CD8-positive, alpha-beta T cell (primary cell): ENCODE measurements at regions of chr13 and their contacts with region 1.

Region 1: GRCh38 chr13:42333613-42334328 is 61.8 kb downstream of the AKAP11 start:
- DNase-seq: peak in 2 of 9 experiments; percentile 30 to 41
- ATAC-seq: no peak
- H3K4me3 ChIP-seq: no peak overlapping the region
- H3K4me3 Mint-ChIP-seq: no peak overlapping the region
- H3K27ac ChIP-seq: no peak overlapping the region
- H3K27ac Mint-ChIP-seq: peak overlapping the region; percentile 30
- H3K4me1 ChIP-seq: peaks cover 8% of the 10 kb centered on the region
- H3K4me1 Mint-ChIP-seq: peaks cover 29% of the 10 kb centered on the region
- H3K27me3 ChIP-seq: no peaks in the 10 kb centered on the region
- H3K27me3 Mint-ChIP-seq: no peaks in the 10 kb centered on the region
- CTCF ChIP-seq: peak; percentile 32

Region 2: DNA sequence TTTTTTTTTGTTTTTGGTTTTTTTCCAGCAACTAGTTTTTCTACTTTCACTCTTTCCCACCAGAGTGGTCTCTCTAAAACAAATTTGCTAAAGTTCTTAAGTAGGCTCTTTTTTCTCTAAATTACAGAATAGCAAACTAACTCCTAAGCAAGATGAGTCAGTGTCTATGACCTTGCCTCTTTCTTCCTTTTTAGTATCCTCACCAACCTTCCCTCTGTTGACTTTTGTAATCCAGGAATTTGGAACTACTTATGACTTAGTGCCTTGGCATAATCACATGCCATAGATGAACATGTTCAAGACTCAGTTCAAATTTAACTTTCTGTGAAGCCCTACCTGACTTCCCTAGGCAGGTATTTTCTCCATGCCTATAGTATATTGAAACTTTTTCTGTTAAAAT is 94.1 kb before region 1 on chr13:
- CTCF ChIA-PET with region 1: no interaction called
- POLR2A ChIA-PET with region 1: no interaction called
- intact Hi-C with region 1: no loop called
- DNase-seq: no peak
- ATAC-seq: no peak
- H3K4me3 ChIP-seq: no peak overlapping the region
- H3K4me3 Mint-ChIP-seq: no peak overlapping the region
- H3K27ac ChIP-seq: no peak overlapping the region
- H3K27ac Mint-ChIP-seq: no peak overlapping the region
- H3K4me1 ChIP-seq: no peaks in the 10 kb centered on the region
- H3K4me1 Mint-ChIP-seq: no peaks in the 10 kb centered on the region
- H3K27me3 ChIP-seq: no peaks in the 10 kb centered on the region
- H3K27me3 Mint-ChIP-seq: no peaks in the 10 kb centered on the region
- CTCF ChIP-seq: no peak

Region 3: GRCh38 chr13:42279080-42279479 is 54.7 kb before region 1 on chr13:
- CTCF ChIA-PET with region 1: no interaction called
- POLR2A ChIA-PET with region 1: no interaction called
- intact Hi-C with region 1: no loop called
- DNase-seq: peak in 2 of 9 experiments; percentile 24 to 44
- ATAC-seq: peak; percentile 46
- H3K4me3 ChIP-seq: no peak overlapping the region
- H3K4me3 Mint-ChIP-seq: no peak overlapping the region
- H3K27ac ChIP-seq: no peak overlapping the region
- H3K27ac Mint-ChIP-seq: no peak overlapping the region
- H3K4me1 ChIP-seq: peaks cover 41% of the 10 kb centered on the region
- H3K4me1 Mint-ChIP-seq: peaks cover 45% of the 10 kb centered on the region
- H3K27me3 ChIP-seq: no peaks in the 10 kb centered on the region
- H3K27me3 Mint-ChIP-seq: no peaks in the 10 kb centered on the region
- CTCF ChIP-seq: no peak

Region 4: DNA sequence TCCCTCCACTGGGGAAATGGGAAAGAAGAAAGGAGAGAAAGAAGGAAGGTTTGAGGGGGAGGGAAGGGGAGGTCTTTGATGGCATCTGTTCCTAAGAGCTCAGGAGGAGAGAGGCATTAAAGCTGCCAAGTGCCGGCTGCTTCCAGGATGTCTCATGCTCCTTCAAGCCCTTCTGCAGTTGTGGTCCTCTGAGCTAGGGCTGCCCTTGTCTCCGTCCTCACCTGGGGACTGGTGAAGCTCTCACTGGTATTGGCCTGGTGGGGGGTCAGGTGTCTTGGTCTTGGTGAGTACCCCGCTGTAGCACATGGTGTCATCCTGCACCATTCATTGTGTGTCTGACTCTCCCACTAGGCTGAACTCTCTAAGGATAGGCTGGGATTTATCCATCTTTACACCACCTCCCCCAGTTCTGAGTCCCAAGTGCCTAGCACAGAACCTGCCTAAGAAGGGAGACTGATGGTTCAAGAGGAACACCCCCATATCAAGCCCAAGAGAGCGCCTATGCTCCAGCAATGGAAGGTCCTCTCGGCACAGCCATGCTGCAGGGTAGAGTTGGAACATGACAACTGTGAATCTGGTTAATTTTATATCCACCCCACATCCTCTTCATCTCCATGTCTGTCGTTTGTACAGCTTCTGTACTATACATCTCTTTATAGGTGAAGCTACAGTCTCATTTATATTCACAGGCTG is 21.9 kb after region 1 on chr13:
- CTCF ChIA-PET with region 1: no interaction called
- POLR2A ChIA-PET with region 1: no interaction called
- intact Hi-C with region 1: no loop called
- DNase-seq: no peak
- ATAC-seq: no peak
- H3K4me3 ChIP-seq: no peak overlapping the region
- H3K4me3 Mint-ChIP-seq: peak overlapping the region; percentile 56
- H3K27ac ChIP-seq: peak overlapping the region in 1 of 2 experiments; percentile 67
- H3K27ac Mint-ChIP-seq: peak overlapping the region; percentile 88
- H3K4me1 ChIP-seq: peaks cover 25% of the 10 kb centered on the region
- H3K4me1 Mint-ChIP-seq: peaks cover 28% of the 10 kb centered on the region
- H3K27me3 ChIP-seq: no peaks in the 10 kb centered on the region
- H3K27me3 Mint-ChIP-seq: no peaks in the 10 kb centered on the region
- CTCF ChIP-seq: no peak

Region 5: GRCh38 chr13:42478531-42479156 is 144.9 kb after region 1 on chr13:
- CTCF ChIA-PET with region 1: interaction called, 11 read pairs
- POLR2A ChIA-PET with region 1: no interaction called
- intact Hi-C with region 1: loop called (anchors 1 to 2 kb)
- DNase-seq: peak in 2 of 9 experiments; percentile 18 to 39
- ATAC-seq: no peak
- H3K4me3 ChIP-seq: no peak overlapping the region
- H3K4me3 Mint-ChIP-seq: no peak overlapping the region
- H3K27ac ChIP-seq: no peak overlapping the region
- H3K27ac Mint-ChIP-seq: no peak overlapping the region
- H3K4me1 ChIP-seq: no peaks in the 10 kb centered on the region
- H3K4me1 Mint-ChIP-seq: no peaks in the 10 kb centered on the region
- H3K27me3 ChIP-seq: no peaks in the 10 kb centered on the region
- H3K27me3 Mint-ChIP-seq: no peaks in the 10 kb centered on the region
- CTCF ChIP-seq: peak; percentile 15

Region 6: GRCh38 chr13:42497798-42498197 is 164.0 kb after region 1 on chr13:
- CTCF ChIA-PET with region 1: no interaction called
- POLR2A ChIA-PET with region 1: no interaction called
- intact Hi-C with region 1: loop called in 1 of 2 experiments (anchors 5 kb)
- DNase-seq: no peak
- ATAC-seq: no peak
- H3K4me3 ChIP-seq: no peak overlapping the region
- H3K4me3 Mint-ChIP-seq: no peak overlapping the region
- H3K27ac ChIP-seq: no peak overlapping the region
- H3K27ac Mint-ChIP-seq: no peak overlapping the region
- H3K4me1 ChIP-seq: no peaks in the 10 kb centered on the region
- H3K4me1 Mint-ChIP-seq: peaks cover 7% of the 10 kb centered on the region
- H3K27me3 ChIP-seq: no peaks in the 10 kb centered on the region
- H3K27me3 Mint-ChIP-seq: no peaks in the 10 kb centered on the region
- CTCF ChIP-seq: no peak